Kidney (tissue), 22 donors: ENCODE measurements at regions of chr6 and their contacts with region 1.

Region 1: GRCh38 chr6:56359201-56359899 is 112.0 kb upstream of the COL21A1 start:
- DNase-seq: peak in 4 of 5 donors; percentile 73 to 87 (median 80)
- H3K4me3 ChIP-seq: peak overlapping the region in 1 of 3 donors; percentile 14
- H3K27ac ChIP-seq: no peak overlapping the region
- H3K4me1 ChIP-seq: no peaks in the 10 kb centered on the region
- H3K27me3 ChIP-seq: no peaks in the 10 kb centered on the region
- CTCF ChIP-seq: peak; percentile 86

Region 2: DNA sequence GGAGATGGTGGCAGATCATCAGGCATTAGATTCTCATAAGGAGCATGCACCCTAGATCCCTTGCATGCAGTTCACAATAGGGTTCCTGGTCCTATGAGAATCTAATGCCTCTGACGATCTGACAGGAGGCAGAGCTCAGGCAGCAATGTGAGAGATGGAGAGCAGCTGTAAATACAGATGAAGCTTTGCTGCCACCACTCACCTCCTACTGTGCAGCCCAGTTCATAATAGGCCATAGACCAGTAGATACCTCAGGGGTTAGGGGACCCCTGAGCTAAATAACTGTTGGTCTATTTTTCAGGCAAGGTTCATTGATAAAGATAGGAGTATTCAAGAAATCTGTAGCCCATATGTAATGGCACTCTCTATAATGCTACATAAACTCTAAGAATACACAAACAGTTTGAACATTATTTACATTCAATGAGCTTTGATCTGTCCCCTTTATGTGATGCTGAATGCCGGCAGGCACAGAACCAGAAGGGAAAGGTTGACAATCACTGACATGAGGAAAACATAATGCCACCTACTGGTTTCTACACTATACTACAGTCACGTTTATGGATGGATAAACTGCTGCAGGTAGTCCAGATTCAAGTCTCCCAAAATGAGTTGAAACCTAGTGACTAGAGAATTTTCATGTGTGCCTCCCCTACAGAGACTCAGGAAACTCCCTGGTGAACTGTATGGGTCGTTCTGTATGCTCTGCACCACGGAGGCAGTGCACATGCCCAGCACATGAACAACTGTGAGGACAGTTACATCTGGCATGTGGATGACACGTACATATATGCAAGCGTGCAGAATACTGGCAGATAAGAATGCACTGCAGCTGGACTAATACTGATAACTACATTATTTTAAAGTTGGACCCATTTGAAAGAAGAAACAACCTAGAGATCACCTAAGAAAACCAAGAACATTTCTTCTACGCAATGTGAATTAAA is 211.3 kb after region 1 on chr6:
- intact Hi-C with region 1: loop called (anchors 10 kb)
- DNase-seq: peak in 2 of 5 donors; percentile 25 to 54
- H3K4me3 ChIP-seq: no peak overlapping the region
- H3K27ac ChIP-seq: no peak overlapping the region
- H3K4me1 ChIP-seq: no peaks in the 10 kb centered on the region
- H3K27me3 ChIP-seq: no peaks in the 10 kb centered on the region
- CTCF ChIP-seq: peak; percentile 58

Region 3: GRCh38 chr6:56593801-56594318 is 234.5 kb after region 1 on chr6:
- intact Hi-C with region 1: loop called (anchors 5 kb)
- DNase-seq: no peak
- H3K4me3 ChIP-seq: no peak overlapping the region
- H3K27ac ChIP-seq: no peak overlapping the region
- H3K4me1 ChIP-seq: no peaks in the 10 kb centered on the region
- H3K27me3 ChIP-seq: no peaks in the 10 kb centered on the region
- CTCF ChIP-seq: no peak